ENCODE measurements at regions of chr2 and their contacts with region 1.

Region 1: GRCh38 chr2:144449028-144449406 is 70.9 kb downstream of the ZEB2 start:
- DNase-seq: peak; percentile 57
- ATAC-seq: peak; percentile 85
- H3K4me3 Mint-ChIP-seq: no peak overlapping the region
- H3K27ac Mint-ChIP-seq: no peak overlapping the region
- H3K4me1 Mint-ChIP-seq: peaks cover 71% of the 10 kb centered on the region
- H3K27me3 Mint-ChIP-seq: peaks cover 39% of the 10 kb centered on the region
- CTCF ChIP-seq: peak; percentile 19; the same call in 1 of the 2 replicates

Region 2: GRCh38 chr2:144421606-144422510 is 27.2 kb before region 1 on chr2:
- CTCF ChIA-PET with region 1: no interaction called
- POLR2A ChIA-PET with region 1: no interaction called
- DNase-seq: no peak
- ATAC-seq: no peak
- H3K4me3 Mint-ChIP-seq: no peak overlapping the region
- H3K27ac Mint-ChIP-seq: no peak overlapping the region
- H3K4me1 Mint-ChIP-seq: peaks cover 8% of the 10 kb centered on the region
- H3K27me3 Mint-ChIP-seq: no peaks in the 10 kb centered on the region
- CTCF ChIP-seq: no peak

Region 3: GRCh38 chr2:144461308-144461766 is 12.3 kb after region 1 on chr2:
- CTCF ChIA-PET with region 1: interaction called, 26 read pairs
- POLR2A ChIA-PET with region 1: no interaction called
- DNase-seq: no peak
- ATAC-seq: peak; percentile 38; the same call in 1 of the 2 replicates
- H3K4me3 Mint-ChIP-seq: no peak overlapping the region
- H3K27ac Mint-ChIP-seq: no peak overlapping the region
- H3K4me1 Mint-ChIP-seq: peaks cover 26% of the 10 kb centered on the region
- H3K27me3 Mint-ChIP-seq: peaks cover 8% of the 10 kb centered on the region; the same call in 1 of the 2 replicates
- CTCF ChIP-seq: no peak

Region 4: DNA sequence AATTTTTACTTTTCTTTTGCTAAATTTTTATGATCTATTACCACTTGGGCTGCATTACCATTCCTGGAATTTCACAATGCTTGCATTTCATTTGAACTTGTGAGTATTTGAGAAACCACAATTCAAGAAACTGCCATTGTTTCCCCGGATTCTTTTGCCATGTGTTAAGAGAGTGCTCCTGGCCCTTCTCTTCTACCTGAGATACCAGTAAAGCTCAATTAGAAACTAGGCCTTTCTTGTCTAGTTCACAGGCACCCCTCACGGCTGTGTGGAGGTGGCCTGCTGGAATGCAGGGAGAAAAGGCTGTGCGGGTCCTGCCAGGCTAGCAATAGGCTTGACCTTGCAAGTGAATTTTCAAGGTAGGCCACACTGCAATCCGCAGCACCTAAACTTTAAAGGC is 30.1 kb after region 1 on chr2:
- CTCF ChIA-PET with region 1: interaction called, 11 read pairs
- POLR2A ChIA-PET with region 1: no interaction called
- DNase-seq: peak; percentile 53
- ATAC-seq: peak; percentile 92
- H3K4me3 Mint-ChIP-seq: no peak overlapping the region
- H3K27ac Mint-ChIP-seq: peak overlapping the region; percentile 91
- H3K4me1 Mint-ChIP-seq: peaks cover 56% of the 10 kb centered on the region
- H3K27me3 Mint-ChIP-seq: peaks cover 6% of the 10 kb centered on the region
- CTCF ChIP-seq: no peak

Region 5: GRCh38 chr2:144510294-144510991 is 61.4 kb after region 1 on chr2:
- CTCF ChIA-PET with region 1: interaction called, 13 read pairs
- POLR2A ChIA-PET with region 1: no interaction called
- DNase-seq: peak; percentile 46
- ATAC-seq: peak; percentile 75
- H3K4me3 Mint-ChIP-seq: peak overlapping the region; percentile 52
- H3K27ac Mint-ChIP-seq: peak overlapping the region; percentile 69; the same call in 1 of the 2 replicates
- H3K4me1 Mint-ChIP-seq: peaks cover 79% of the 10 kb centered on the region
- H3K27me3 Mint-ChIP-seq: peaks cover 75% of the 10 kb centered on the region
- CTCF ChIP-seq: no peak